ENCODE measurements at regions of chr11 and their contacts with region 1.

Region 1: GRCh38 chr11:83193315-83194280 is at the start of gene ANKRD42:
- DNase-seq: peak; percentile 90
- H3K4me3 Mint-ChIP-seq: peak within 1 kb of the TSS; percentile 95
- H3K27ac Mint-ChIP-seq: peak within 1 kb of the TSS; percentile 95
- H3K4me1 Mint-ChIP-seq: peaks cover 44% of the 10 kb centered on the region
- H3K27me3 Mint-ChIP-seq: no peaks in the 10 kb centered on the region
- total RNA-seq, gene ANKRD42: 2.3 to 2.7 TPM

Region 2: DNA sequence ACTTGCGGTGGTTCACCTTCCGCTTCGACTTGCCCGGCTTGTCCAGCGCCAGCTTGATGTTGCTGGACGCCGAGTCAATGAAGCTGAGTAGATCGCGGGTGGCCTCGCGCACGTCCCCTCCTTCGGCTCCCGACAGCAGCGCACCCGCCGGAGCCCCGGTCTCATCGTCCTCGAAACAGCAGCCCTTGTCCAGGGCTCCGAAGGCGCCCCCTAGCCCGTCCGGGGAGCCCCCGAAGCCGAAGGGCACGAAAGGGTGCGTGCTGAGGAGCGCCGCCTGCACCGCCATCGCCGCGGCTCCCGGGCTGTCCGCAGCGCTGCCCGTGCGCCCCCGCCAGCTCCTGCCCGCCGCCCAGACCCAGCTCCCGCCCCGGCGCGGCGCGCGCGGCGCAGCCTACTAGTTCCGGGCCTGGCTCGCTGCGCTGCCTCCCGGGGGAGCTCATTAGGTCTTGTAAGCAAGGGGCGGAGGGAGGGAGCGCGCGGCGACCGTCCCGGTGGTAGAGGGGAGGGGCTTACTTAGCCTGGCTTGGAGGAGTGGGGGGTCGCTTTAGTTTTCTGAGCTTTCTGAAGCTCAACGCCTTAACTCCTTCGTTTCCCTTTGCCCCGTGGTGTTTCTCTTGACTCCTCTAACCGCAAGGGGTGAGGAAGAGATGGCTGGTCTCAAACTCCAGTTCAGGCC is 460.0 kb before region 1 on chr11 and contains the start of gene FAM181B:
- CTCF ChIA-PET with region 1: no interaction called
- intact Hi-C with region 1: loop called (anchors 5 kb)
- DNase-seq: peak; percentile 53
- H3K4me3 Mint-ChIP-seq: peak within 1 kb of the TSS; percentile 68
- H3K27ac Mint-ChIP-seq: no peak within 1 kb of the TSS
- H3K4me1 Mint-ChIP-seq: peaks cover 14% of the 10 kb centered on the region
- H3K27me3 Mint-ChIP-seq: peaks cover 28% of the 10 kb centered on the region
- total RNA-seq, gene FAM181B: not detected

Region 3: DNA sequence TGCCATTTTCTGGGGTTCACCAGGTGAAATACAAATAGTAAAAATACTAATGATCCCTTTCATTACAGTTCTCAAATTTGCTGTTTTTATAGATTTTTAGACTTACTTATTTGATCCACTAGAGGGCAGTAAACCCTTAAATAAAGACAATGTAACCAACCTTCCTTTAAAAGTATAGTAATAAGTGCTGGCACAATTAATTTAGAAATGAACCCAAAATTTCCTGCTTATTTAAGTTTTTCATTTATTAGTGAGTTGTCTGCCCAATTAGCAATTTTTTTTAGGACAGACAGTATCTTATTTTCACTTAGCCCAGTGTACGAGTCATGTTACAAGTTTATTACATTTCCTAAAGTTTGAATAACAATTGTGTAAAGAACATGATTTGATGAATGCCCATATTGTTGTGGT is 287.3 kb before region 1 on chr11:
- CTCF ChIA-PET with region 1: interaction called, 4 read pairs
- intact Hi-C with region 1: loop called (anchors 1 kb)
- DNase-seq: no peak
- H3K4me3 Mint-ChIP-seq: no peak overlapping the region
- H3K27ac Mint-ChIP-seq: no peak overlapping the region
- H3K4me1 Mint-ChIP-seq: peaks cover 61% of the 10 kb centered on the region
- H3K27me3 Mint-ChIP-seq: no peaks in the 10 kb centered on the region

Region 4: GRCh38 chr11:83115551-83115950 is 78.0 kb before region 1 on chr11:
- CTCF ChIA-PET with region 1: no interaction called
- intact Hi-C with region 1: loop called (anchors 1 kb)
- DNase-seq: no peak
- H3K4me3 Mint-ChIP-seq: no peak overlapping the region
- H3K27ac Mint-ChIP-seq: no peak overlapping the region
- H3K4me1 Mint-ChIP-seq: peaks cover 51% of the 10 kb centered on the region
- H3K27me3 Mint-ChIP-seq: no peaks in the 10 kb centered on the region